Sigmoid colon (tissue), 7 donors: ENCODE measurements at regions of chr14 and their contacts with region 1.

Region 1: DNA sequence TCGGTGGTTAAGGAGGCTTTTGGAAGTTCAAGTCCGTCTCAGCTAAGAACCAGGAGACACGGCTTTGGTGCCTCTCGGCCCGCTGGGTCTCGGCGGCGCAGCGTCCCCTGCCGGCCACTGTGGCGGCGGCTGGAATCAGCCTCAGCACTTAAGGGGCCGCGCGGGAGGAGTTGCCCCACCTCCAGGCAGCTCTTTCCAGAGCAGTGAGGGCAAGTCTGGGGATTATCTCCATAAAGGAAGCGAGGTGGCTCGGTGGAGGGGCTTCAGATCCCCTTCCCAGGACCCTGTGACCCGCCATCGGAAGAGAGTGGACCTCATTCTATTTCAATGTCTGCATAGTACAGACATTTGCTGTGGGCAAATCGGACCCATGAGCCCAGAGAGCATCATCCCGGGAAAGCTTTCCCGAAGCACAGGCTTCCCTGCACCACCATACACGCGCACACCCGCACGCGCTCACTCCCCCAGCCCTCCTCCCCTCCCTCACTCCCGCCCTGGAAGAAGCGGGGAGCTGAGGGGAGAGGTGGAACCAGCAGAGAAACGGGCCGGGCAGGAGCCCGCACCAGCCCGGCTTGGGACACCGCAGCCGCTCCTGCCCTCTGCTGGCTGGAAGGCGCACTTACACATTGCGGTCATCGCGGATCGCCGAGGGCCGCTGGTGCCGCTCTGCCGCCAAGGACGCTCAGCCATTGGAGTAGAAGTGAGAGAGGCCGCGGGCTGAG is 15.9 kb downstream of the RNASE2 start:
- DNase-seq: peak; percentile 92
- H3K4me3 ChIP-seq: peak overlapping the region; percentile 32 to 62 (median 60)
- H3K27ac ChIP-seq: peak overlapping the region; percentile 79 to 88 (median 80)
- H3K4me1 ChIP-seq: peaks cover 0 to 11% (median 10%) of the 10 kb centered on the region in 4 donors
- H3K27me3 ChIP-seq: no peaks in the 10 kb centered on the region
- CTCF ChIP-seq: peak; percentile 72 to 89 (median 82)
- EP300 ChIP-seq: no peak
- POLR2A ChIP-seq: no peak

Region 2: GRCh38 chr14:20697273-20698017 is 273.7 kb before region 1 on chr14:
- intact Hi-C with region 1: loop called (anchors 5 kb)
- DNase-seq: no peak
- H3K4me3 ChIP-seq: no peak overlapping the region
- H3K27ac ChIP-seq: no peak overlapping the region
- H3K4me1 ChIP-seq: no peaks in the 10 kb centered on the region
- H3K27me3 ChIP-seq: no peaks in the 10 kb centered on the region
- CTCF ChIP-seq: peak in 3 of 4 experiments; percentile 28 to 46 (median 46)
- EP300 ChIP-seq: no peak
- POLR2A ChIP-seq: no peak

Region 3: GRCh38 chr14:20855652-20856291 is 115.4 kb before region 1 on chr14:
- intact Hi-C with region 1: loop called (anchors 1 kb)
- DNase-seq: no peak
- H3K4me3 ChIP-seq: no peak overlapping the region
- H3K27ac ChIP-seq: no peak overlapping the region
- H3K4me1 ChIP-seq: peaks cover 0 to 6% (median 2%) of the 10 kb centered on the region in 4 donors
- H3K27me3 ChIP-seq: peaks cover 0 to 8% (median 7%) of the 10 kb centered on the region in 3 donors
- CTCF ChIP-seq: peak; percentile 26 to 55 (median 49)
- EP300 ChIP-seq: no peak
- POLR2A ChIP-seq: no peak

Region 4: DNA sequence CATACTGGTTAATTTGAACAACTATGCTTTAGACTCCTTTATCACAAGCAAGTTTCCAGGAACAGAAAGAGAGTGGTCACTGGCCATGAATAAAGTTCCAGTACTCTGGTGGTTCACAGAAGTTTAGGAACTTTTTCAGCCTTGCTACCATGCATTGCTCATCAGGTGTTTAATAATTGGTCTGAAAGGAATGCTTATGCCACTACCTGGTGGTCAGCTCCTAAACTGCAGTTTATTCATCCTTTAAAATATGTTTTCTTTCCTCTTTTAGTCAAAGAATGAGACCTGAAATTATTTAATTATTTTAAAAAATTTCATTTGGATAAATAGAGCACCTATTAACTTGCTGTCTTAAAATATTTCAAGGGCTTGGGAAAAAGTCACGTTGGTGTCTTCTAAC is 962.5 kb after region 1 on chr14:
- intact Hi-C with region 1: no loop called
- DNase-seq: no peak
- H3K4me3 ChIP-seq: no peak overlapping the region
- H3K27ac ChIP-seq: no peak overlapping the region
- H3K4me1 ChIP-seq: no peaks in the 10 kb centered on the region
- H3K27me3 ChIP-seq: no peaks in the 10 kb centered on the region
- CTCF ChIP-seq: peak in 2 of 4 experiments; percentile 27
- EP300 ChIP-seq: no peak
- POLR2A ChIP-seq: no peak